ENCODE measurements at regions of chr9 and their contacts with region 1.

Region 1: GRCh38 chr9:120755827-120756434 is 37.3 kb downstream of the FBXW2 start:
- DNase-seq: no peak
- ATAC-seq: peak; percentile 43 to 88 (median 65)
- H3K4me3 ChIP-seq: no peak overlapping the region
- H3K27ac ChIP-seq: no peak overlapping the region
- H3K4me1 ChIP-seq: peaks cover 3% of the 10 kb centered on the region
- H3K27me3 ChIP-seq: no peaks in the 10 kb centered on the region
- CTCF ChIP-seq: peak; percentile 88

Region 2: GRCh38 chr9:120936011-120936763 is 180.3 kb after region 1 on chr9:
- intact Hi-C with region 1: loop called (anchors 2 kb)
- DNase-seq: peak; percentile 92 to 96
- ATAC-seq: peak; percentile 87 to 94 (median 91)
- H3K4me3 ChIP-seq: no peak overlapping the region
- H3K27ac ChIP-seq: peak overlapping the region; percentile 51
- H3K4me1 ChIP-seq: peaks cover 17% of the 10 kb centered on the region
- H3K27me3 ChIP-seq: peaks cover 0 to 1% (median 0%) of the 10 kb centered on the region in 3 donors
- CTCF ChIP-seq: peak; percentile 89

Measured in psoas muscle (tissue), 8 donors.